Psoas muscle (tissue), 8 donors: ENCODE measurements at regions of chr10 and their contacts with region 1.

Region 1: DNA sequence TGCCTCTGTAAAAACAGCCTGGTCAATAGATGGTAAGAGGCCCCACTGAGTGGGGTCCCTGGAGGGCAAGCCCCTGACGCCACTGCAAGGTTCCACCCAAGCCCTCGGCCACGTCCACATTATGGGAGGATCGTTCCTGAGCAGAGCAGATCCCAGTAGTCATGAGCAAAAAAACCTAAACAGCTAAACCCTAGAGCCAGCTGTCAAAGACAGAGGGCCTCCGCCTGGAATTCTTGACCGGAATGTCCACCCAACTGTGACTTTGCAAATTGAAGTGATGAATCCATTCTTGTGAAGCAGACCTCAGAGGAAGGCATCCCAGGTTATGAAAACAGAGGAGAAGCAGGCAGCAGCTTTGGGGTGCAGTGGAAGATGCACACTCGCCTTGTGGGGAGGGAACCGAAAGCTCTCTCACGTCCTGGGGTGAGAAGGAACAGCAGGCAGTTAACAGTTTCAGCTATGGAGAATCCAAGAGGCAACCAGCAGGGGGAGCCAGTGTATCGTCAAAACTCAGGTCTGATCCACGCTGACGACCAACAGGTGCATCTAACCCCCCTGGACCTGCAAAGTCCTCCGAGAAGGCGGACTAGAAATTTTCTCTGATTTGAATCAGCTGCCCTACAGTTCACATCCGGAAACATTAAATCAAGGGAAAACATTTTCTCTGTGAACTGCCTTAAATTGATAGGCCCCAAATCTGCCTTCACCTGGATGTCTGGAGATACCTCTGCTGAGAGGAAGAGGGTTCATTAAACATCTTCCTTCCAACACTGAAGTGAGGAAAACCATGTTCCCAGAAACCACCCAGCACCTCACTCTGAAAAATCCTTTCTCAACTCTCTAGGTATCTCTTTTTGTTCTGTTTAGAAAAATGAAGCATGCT is 139.1 kb upstream of the PFKP start:
- DNase-seq: peak; percentile 43 to 74
- ATAC-seq: peak; percentile 86 to 90 (median 88)
- H3K4me3 ChIP-seq: no peak overlapping the region
- H3K27ac ChIP-seq: no peak overlapping the region
- H3K4me1 ChIP-seq: no peaks in the 10 kb centered on the region
- H3K27me3 ChIP-seq: peaks cover 2 to 10% (median 3%) of the 10 kb centered on the region in 3 donors
- CTCF ChIP-seq: peak; percentile 70

Region 2: DNA sequence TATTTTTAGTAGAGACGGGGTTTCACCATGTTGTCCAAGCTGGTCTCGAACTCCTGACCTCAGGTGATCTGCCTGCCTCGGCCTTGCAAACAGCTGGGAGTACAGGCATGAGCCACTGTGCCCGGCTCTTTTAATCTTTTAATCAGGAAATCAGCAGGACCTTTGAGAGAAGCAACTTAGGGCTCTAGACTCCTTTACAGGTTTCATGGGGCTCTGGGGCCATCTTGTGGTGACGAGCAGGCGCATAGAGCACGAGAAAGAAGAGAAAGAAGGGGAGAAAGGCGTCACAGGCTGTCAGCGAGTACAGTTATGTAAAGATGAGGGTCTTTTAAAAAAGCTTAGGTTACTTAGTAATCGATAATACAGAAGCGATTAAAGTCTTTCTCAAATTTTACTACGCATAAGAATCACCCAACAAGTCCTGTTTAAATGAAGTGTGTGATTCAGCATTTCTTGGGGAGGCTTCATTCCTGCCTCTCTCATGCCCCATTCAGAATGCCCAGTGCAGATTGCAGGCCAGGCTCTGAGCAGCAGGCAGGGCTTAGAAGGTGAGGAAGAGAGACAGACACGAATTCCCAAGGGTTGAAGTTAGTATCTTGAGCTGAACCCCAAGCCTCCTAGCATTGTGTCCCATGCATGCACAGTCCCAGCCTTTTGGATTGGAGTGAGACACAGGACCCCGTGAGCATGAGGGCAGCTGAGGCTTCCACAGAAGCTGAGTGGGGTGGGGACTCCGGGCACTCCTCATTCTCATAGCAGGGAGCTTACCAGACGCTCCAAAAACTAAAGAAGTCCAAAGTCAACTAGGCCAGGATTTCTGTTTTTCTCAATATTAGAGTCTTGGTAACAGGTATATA is 115.5 kb after region 1 on chr10:
- intact Hi-C with region 1: loop called (anchors 2 to 5 kb)
- DNase-seq: peak; percentile 47 to 69
- ATAC-seq: peak; percentile 58 to 81 (median 73)
- H3K4me3 ChIP-seq: no peak overlapping the region
- H3K27ac ChIP-seq: no peak overlapping the region
- H3K4me1 ChIP-seq: peaks cover 2% of the 10 kb centered on the region
- H3K27me3 ChIP-seq: no peaks in the 10 kb centered on the region
- CTCF ChIP-seq: peak; percentile 61

Region 3: GRCh38 chr10:3054183-3054850 is 126.1 kb after region 1 on chr10:
- intact Hi-C with region 1: no loop called
- DNase-seq: no peak
- ATAC-seq: no peak
- H3K4me3 ChIP-seq: no peak overlapping the region
- H3K27ac ChIP-seq: no peak overlapping the region
- H3K4me1 ChIP-seq: no peaks in the 10 kb centered on the region
- H3K27me3 ChIP-seq: no peaks in the 10 kb centered on the region
- CTCF ChIP-seq: no peak

Region 4: GRCh38 chr10:3197348-3198003 is 269.3 kb after region 1 on chr10:
- intact Hi-C with region 1: loop called (anchors 5 to 10 kb)
- DNase-seq: peak; percentile 82 to 89
- ATAC-seq: peak; percentile 94 to 98 (median 96)
- H3K4me3 ChIP-seq: peak overlapping the region; percentile 33
- H3K27ac ChIP-seq: no peak overlapping the region
- H3K4me1 ChIP-seq: peaks cover 7% of the 10 kb centered on the region
- H3K27me3 ChIP-seq: no peaks in the 10 kb centered on the region
- CTCF ChIP-seq: peak; percentile 89